Activated T-helper 2 cell treated with anti-CD3 and anti-CD28 coated beads, Interferon-gamma antibody, Interleukin-2, Interleukin-4, amounts not matched to agents 10 μg/mL and 5 μg/mL and 100 μg/mL, durations not matched to agents 14 hours and 24 hours and 36 hours (primary cell): ENCODE measurements at regions of chr13 and their contacts with region 1.

Region 1: GRCh38 chr13:26253787-26254582 is at the start of gene CDK8:
- DNase-seq: peak; percentile 85
- H3K4me3 Mint-ChIP-seq: peak within 1 kb of the TSS; percentile 92
- H3K27ac Mint-ChIP-seq: peak within 1 kb of the TSS; percentile 90
- H3K4me1 Mint-ChIP-seq: peaks cover 30% of the 10 kb centered on the region
- H3K27me3 Mint-ChIP-seq: no peaks in the 10 kb centered on the region
- total RNA-seq, gene CDK8: 18.3 and 21.2 TPM in 2 replicates

Region 2: GRCh38 chr13:26037301-26037700 is 216.7 kb before region 1 on chr13:
- intact Hi-C with region 1: no loop called
- DNase-seq: no peak
- H3K4me3 Mint-ChIP-seq: no peak overlapping the region
- H3K27ac Mint-ChIP-seq: no peak overlapping the region
- H3K4me1 Mint-ChIP-seq: no peaks in the 10 kb centered on the region
- H3K27me3 Mint-ChIP-seq: peaks cover 26% of the 10 kb centered on the region

Region 3: GRCh38 chr13:26221721-26222519 is 32.1 kb before region 1 on chr13 and contains the start of gene RNF6:
- intact Hi-C with region 1: loop called (anchors 1 kb)
- DNase-seq: peak; percentile 85
- H3K4me3 Mint-ChIP-seq: peak within 1 kb of the TSS; percentile 100
- H3K27ac Mint-ChIP-seq: peak within 1 kb of the TSS; percentile 99
- H3K4me1 Mint-ChIP-seq: peaks cover 34% of the 10 kb centered on the region
- H3K27me3 Mint-ChIP-seq: peaks cover 5% of the 10 kb centered on the region
- total RNA-seq, gene RNF6: 44.3 and 48.0 TPM in 2 replicates

Region 4: GRCh38 chr13:26325876-26326275 is 71.9 kb after region 1 on chr13:
- intact Hi-C with region 1: loop called (anchors 5 kb)
- DNase-seq: no peak
- H3K4me3 Mint-ChIP-seq: no peak overlapping the region
- H3K27ac Mint-ChIP-seq: peak overlapping the region; percentile 15
- H3K4me1 Mint-ChIP-seq: peaks cover 32% of the 10 kb centered on the region
- H3K27me3 Mint-ChIP-seq: no peaks in the 10 kb centered on the region

Region 5: DNA sequence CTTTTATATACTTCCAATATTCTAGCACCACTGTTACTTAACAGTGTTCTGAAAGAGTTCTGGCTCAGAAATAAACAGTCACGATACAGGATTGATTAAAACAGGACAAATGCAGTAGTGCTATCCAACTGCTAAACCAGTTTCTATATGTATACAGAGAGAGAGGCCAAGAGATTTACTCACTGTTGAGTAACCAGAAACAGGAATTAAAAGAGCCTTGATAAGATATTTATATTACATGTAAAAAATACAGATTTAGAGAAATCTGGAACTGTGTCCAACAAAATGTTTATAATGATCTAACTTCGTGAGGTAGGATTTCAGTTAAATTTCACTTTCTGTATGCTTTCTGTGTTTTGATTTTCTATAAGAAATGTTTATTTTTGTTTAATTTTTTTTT is 116.6 kb after region 1 on chr13:
- intact Hi-C with region 1: no loop called
- DNase-seq: no peak
- H3K4me3 Mint-ChIP-seq: no peak overlapping the region
- H3K27ac Mint-ChIP-seq: no peak overlapping the region
- H3K4me1 Mint-ChIP-seq: peaks cover 6% of the 10 kb centered on the region
- H3K27me3 Mint-ChIP-seq: no peaks in the 10 kb centered on the region